CD14-positive monocyte (primary cell): ENCODE measurements at regions of chr1 and their contacts with region 1.

Region 1: DNA sequence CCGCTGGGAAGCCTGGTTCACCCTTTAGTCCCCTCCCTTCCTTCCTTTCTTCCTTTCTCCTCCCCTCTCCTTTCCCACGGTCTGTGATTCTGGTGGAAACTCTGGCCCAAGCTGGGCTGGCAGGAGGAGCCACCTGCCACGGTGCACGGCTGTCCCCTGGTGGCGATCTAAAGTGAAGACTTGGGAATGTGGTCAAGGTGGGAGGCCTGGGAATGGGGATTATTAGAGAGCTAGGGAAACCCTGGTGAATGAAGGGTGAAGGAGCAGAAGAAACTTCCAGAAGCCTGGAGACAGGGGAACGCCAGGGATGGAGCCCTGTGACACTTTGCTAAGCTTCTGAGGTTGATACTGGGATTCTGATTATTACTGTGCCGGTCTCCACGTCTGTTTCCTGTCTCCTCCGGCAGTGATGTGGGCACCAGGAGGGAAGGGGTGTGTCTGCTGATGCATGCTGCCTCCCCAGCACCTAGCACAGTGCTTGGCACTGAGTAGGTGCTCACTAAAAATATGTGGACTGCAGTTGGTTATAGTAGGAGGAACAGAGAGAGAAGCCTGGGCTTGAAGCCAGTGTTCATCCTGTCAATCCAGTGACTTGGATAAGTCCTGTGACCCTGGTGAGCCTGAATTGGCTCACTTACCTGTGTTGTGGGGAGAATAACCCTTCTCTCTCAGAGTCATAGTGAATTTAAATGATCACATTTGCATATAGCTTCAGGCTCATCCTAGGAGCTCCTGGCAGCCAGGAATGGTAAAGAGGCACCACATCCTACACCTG is 71.2 kb upstream of the NBPF3 start:
- DNase-seq: peak; percentile 48 to 75 (median 70)
- H3K4me3 ChIP-seq: no peak overlapping the region
- H3K4me3 Mint-ChIP-seq: peak overlapping the region in 1 of 2 donors; percentile 40
- H3K27ac ChIP-seq: no peak overlapping the region
- H3K27ac Mint-ChIP-seq: peak overlapping the region in 1 of 7 donors; percentile 77
- H3K4me1 ChIP-seq: peaks cover 7 to 8% of the 10 kb centered on the region in 2 donors
- H3K4me1 Mint-ChIP-seq: peaks cover 13% of the 10 kb centered on the region
- H3K27me3 ChIP-seq: peaks cover 0 to 4% of the 10 kb centered on the region in 2 donors
- H3K27me3 Mint-ChIP-seq: peaks cover 21 to 43% (median 25%) of the 10 kb centered on the region in 3 donors
- CTCF ChIP-seq: peak; percentile 100

Region 2: DNA sequence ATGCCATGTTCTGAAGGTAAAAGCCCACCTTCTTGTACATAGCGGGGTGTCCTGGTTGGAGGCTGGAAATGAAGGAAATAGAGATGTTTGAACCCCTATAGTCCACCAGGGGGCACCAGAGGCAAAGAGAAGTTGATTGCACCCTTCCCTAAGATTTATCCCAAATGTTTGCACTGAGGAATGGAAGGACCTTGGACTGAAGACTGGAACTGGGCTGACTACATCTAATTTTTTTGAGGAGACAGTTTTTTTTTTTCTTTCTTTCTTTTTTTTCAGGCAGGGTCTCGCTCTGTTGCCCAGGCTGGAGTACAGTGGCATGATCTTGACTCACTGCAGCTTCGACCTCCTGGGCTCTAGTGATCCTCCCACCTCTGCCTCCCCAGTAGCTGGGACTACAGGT is 136.7 kb before region 1 on chr1:
- intact Hi-C with region 1: loop called (anchors 1 to 5 kb)
- DNase-seq: peak; percentile 16 to 51 (median 46)
- H3K4me3 ChIP-seq: no peak overlapping the region
- H3K4me3 Mint-ChIP-seq: no peak overlapping the region
- H3K27ac ChIP-seq: no peak overlapping the region
- H3K27ac Mint-ChIP-seq: peak overlapping the region in 1 of 7 donors; percentile 26
- H3K4me1 ChIP-seq: no peaks in the 10 kb centered on the region
- H3K4me1 Mint-ChIP-seq: no peaks in the 10 kb centered on the region
- H3K27me3 ChIP-seq: no peaks in the 10 kb centered on the region
- H3K27me3 Mint-ChIP-seq: peaks cover 12 to 29% (median 26%) of the 10 kb centered on the region in 3 donors
- CTCF ChIP-seq: peak; percentile 99

Region 3: DNA sequence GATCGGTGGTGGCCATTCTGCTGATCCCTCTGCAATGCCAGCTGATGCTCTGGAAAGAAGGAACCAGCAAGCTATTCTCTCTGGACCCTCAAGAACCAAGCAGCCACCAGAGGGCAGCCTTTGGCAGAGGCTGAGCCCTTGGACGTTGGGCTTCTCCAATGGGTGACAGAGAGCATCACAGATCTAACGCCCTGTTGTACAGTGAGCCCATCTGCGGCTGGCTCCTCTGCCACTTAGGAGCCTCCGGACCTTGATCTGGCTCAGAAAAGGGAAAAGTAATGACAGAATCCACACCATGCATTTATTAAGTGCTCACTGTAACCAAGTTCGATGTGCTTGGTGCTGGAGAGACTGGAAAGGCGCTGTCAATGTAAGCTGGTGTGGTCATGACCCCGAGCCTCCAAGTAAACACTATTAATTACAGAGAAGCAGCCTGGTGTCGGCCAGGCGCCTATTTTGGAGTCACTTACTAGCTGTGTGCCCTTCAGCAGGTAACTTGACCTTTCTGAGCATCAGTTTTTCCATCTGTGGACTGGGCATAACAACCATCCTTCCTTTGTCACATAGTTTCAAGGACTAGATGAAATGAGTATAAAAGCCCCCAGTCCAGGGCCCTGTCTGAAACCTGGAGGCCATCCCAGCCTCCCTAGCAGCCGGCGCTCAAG is 113.3 kb before region 1 on chr1:
- intact Hi-C with region 1: loop called (anchors 2 to 5 kb)
- DNase-seq: peak; percentile 83 to 89 (median 84)
- H3K4me3 ChIP-seq: no peak overlapping the region
- H3K4me3 Mint-ChIP-seq: peak overlapping the region in 1 of 2 donors; percentile 48
- H3K27ac ChIP-seq: no peak overlapping the region
- H3K27ac Mint-ChIP-seq: peak overlapping the region; percentile 36 to 80 (median 66)
- H3K4me1 ChIP-seq: peaks cover 0 to under 1% of the 10 kb centered on the region in 2 donors
- H3K4me1 Mint-ChIP-seq: peaks cover 10% of the 10 kb centered on the region
- H3K27me3 ChIP-seq: peaks cover 0 to 18% of the 10 kb centered on the region in 2 donors
- H3K27me3 Mint-ChIP-seq: peaks cover 19 to 66% (median 42%) of the 10 kb centered on the region in 3 donors
- CTCF ChIP-seq: peak; percentile 85

Region 4: GRCh38 chr1:21289700-21290545 is 78.8 kb before region 1 on chr1 and contains the start of gene ECE1:
- intact Hi-C with region 1: no loop called
- DNase-seq: peak; percentile 56 to 67 (median 65)
- H3K4me3 ChIP-seq: peak within 1 kb of the TSS; percentile 66 to 79 (median 67)
- H3K4me3 Mint-ChIP-seq: peak within 1 kb of the TSS; percentile 93 to 94
- H3K27ac ChIP-seq: peak within 1 kb of the TSS; percentile 67 to 94
- H3K27ac Mint-ChIP-seq: peak within 1 kb of the TSS; percentile 51 to 99 (median 95)
- H3K4me1 ChIP-seq: peaks cover 62 to 76% of the 10 kb centered on the region in 2 donors
- H3K4me1 Mint-ChIP-seq: peaks cover 67% of the 10 kb centered on the region
- H3K27me3 ChIP-seq: peaks cover 0 to 32% of the 10 kb centered on the region in 2 donors
- H3K27me3 Mint-ChIP-seq: peaks cover 21 to 55% (median 52%) of the 10 kb centered on the region in 3 donors
- CTCF ChIP-seq: no peak
- polyA plus RNA-seq, gene ECE1: 10.6 to 42.4 (median 23.3) TPM

Region 5: GRCh38 chr1:21302747-21303715 is 65.7 kb before region 1 on chr1:
- intact Hi-C with region 1: loop called (anchors 2 to 5 kb)
- DNase-seq: peak in 2 of 3 donors; percentile 49 to 77
- H3K4me3 ChIP-seq: no peak overlapping the region
- H3K4me3 Mint-ChIP-seq: no peak overlapping the region
- H3K27ac ChIP-seq: no peak overlapping the region
- H3K27ac Mint-ChIP-seq: peak overlapping the region in 1 of 7 donors; percentile 88
- H3K4me1 ChIP-seq: peaks cover 10 to 19% of the 10 kb centered on the region in 2 donors
- H3K4me1 Mint-ChIP-seq: peaks cover 32% of the 10 kb centered on the region
- H3K27me3 ChIP-seq: peaks cover 0 to 14% of the 10 kb centered on the region in 2 donors
- H3K27me3 Mint-ChIP-seq: peaks cover 19 to 49% (median 33%) of the 10 kb centered on the region in 3 donors
- CTCF ChIP-seq: peak; percentile 32

Region 6: GRCh38 chr1:21414015-21414414 is 45.3 kb after region 1 on chr1:
- intact Hi-C with region 1: no loop called
- DNase-seq: no peak
- H3K4me3 ChIP-seq: no peak overlapping the region
- H3K4me3 Mint-ChIP-seq: no peak overlapping the region
- H3K27ac ChIP-seq: no peak overlapping the region
- H3K27ac Mint-ChIP-seq: no peak overlapping the region
- H3K4me1 ChIP-seq: no peaks in the 10 kb centered on the region
- H3K4me1 Mint-ChIP-seq: no peaks in the 10 kb centered on the region
- H3K27me3 ChIP-seq: peaks cover 0 to 3% of the 10 kb centered on the region in 2 donors
- H3K27me3 Mint-ChIP-seq: peaks cover 11 to 44% (median 14%) of the 10 kb centered on the region in 3 donors
- CTCF ChIP-seq: no peak

Region 7: DNA sequence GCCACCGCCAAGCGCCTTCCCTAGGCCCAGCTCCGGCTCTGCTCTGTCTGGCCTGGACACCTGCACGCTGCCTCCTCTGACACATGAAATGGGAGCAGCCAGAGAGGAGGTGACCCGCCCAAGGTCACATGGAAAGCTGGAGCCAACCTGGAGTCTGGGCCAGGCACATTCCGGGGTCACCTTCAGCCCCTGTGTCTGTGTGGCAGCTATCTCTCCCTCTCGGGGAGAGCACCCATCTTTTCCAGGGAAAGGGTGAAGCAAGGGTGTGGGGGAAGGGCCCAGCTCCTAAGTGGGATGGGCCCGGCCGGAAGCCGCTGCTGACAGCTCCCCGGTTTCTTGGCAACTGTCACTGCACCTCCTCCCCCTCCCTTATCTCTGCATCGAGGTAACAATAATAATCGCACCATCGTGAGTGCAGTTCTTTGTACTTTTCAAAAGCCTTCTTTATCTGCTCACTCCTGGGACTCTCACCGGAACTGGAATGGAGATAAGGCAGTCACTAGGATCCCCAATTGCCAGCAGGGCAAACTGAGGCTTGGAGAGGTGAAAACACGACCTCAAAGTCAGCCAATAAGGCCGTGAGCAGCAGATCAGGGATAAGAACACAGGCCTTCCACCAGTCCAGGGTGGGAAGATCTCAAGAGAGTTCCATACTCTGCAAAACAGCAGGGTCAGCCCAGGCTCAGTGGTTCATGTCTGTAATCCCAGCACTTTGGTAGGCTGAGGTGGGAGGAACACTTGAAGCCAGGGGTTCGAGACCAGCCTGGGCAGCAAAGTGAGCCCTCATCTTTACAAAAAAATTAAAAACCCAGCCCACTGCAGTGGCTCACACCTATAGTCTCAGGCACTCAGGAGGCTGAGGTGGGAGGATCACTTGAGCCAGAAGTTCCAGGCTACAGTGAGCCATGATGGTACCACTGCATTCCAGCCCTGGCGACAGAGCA is 263.5 kb after region 1 on chr1:
- intact Hi-C with region 1: no loop called
- DNase-seq: no peak
- H3K4me3 ChIP-seq: no peak overlapping the region
- H3K4me3 Mint-ChIP-seq: no peak overlapping the region
- H3K27ac ChIP-seq: no peak overlapping the region
- H3K27ac Mint-ChIP-seq: no peak overlapping the region
- H3K4me1 ChIP-seq: no peaks in the 10 kb centered on the region
- H3K4me1 Mint-ChIP-seq: peaks cover 6% of the 10 kb centered on the region
- H3K27me3 ChIP-seq: no peaks in the 10 kb centered on the region
- H3K27me3 Mint-ChIP-seq: peaks cover 11 to 19% (median 13%) of the 10 kb centered on the region in 3 donors
- CTCF ChIP-seq: no peak